ENCODE measurements at regions of chr1 and their contacts with region 1.

Region 1: DNA sequence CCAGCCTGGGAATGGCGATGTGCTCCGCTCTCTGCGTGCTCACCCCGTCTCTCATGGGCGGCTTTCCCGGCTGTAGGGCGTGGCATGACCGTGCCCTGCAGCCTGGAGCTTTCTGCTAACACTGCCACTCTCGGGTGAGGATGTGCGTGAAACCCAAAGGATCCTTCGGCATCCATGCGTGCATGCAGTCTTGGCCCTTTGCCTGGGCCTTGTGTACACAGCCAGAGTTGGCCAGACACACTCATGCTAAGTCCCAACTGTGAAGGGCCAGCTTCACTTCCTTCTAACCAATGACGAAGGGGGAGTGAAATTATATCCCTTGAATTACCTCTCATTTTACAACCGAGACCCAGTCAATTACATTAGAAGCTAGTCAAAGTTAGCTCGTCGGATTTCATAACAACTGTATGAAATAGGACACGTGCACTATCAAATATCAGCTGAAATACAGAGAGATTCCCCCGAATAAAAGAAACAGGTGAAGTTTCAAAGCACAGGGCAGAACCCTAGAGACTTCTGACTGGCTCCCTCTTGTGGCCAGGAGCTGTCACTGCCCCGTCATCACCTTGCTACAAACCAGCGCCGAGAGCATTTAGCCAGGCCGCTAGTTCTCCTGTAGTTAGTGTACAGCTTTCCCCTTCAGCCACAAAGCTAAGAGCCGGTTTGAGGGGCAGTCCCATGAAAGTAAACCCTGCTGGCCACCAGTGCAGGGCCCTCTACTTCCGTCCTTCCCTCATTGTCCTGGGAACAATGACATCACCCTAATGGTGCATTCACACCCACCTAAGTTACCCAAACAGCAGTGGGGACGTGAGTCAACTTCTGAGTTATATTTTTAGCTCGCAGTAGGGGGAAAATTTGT is 63.4 kb upstream of the COA6 start:
- DNase-seq: peak; percentile 86
- ATAC-seq: peak; percentile 93
- H3K4me3 ChIP-seq: peak overlapping the region; percentile 30
- H3K27ac ChIP-seq: peak overlapping the region; percentile 67 to 81
- H3K4me1 ChIP-seq: peaks cover 24% of the 10 kb centered on the region
- CTCF ChIP-seq: peak; percentile 94
- EP300 ChIP-seq: no peak; a peak in 1 of 5 replicates
- POLR2A ChIP-seq: no peak
- RAD21 ChIP-seq: peak; percentile 72 to 76

Region 2: DNA sequence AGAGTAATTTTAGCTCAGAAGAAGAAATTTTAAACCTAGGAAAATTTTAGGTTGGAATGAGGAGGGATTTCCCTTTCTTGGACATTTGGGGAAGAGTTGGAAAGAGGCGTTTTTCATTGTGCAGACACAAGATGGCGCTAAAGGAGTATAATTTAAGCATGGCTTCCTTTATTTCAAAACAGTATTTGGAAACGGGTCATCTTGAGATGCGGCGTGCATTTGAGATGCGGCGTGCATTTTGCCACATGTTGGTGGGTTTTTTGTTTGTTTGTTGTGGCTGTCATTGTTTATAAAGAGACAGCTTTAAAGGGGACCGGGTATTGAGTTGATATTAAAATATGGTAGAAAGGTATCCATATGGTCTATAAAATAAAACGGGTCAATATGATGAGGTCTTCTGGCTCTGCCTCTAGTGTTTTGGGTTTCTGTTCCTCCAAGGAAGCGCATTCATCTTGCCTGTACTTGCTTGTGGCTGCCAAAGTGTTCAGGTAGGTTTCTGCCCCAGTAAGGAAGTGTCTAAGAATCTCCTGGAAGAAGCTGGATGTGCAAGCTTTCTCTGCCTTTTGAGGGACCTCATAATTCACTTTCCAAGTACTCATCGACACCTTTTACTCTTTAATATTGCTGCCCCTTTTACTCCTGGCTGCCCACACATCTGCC is 195.1 kb before region 1 on chr1:
- CTCF ChIA-PET with region 1: interaction called, 116 read pairs
- POLR2A ChIA-PET with region 1: interaction called, 4 read pairs
- DNase-seq: peak; percentile 52 to 69
- ATAC-seq: peak; percentile 66 to 67; a peak in 5 of 6 replicates
- H3K4me3 ChIP-seq: peak overlapping the region; percentile 34
- H3K27ac ChIP-seq: peak overlapping the region; percentile 56 to 78
- H3K4me1 ChIP-seq: peaks cover 25% of the 10 kb centered on the region
- CTCF ChIP-seq: peak; percentile 88
- EP300 ChIP-seq: no peak
- POLR2A ChIP-seq: no peak
- RAD21 ChIP-seq: peak; percentile 84 to 93

Region 3: DNA sequence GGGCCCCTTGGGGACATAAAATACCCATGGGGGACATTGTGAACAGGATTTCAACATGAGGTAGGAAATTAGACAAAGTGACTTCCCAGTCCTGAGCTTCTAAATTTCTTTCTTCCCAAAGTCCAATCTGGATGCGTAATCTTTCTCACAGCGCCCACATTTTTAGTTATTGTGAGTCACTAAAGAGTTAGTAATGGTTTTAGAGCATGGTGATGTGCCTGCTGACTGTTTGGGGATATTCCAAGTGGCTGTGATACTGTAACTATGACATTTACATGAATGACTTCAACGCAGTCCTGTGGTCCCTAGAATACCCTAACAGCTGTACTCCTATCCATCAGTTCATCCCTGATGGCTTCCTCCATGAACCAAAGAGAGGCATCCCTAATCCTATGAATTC is 160.6 kb before region 1 on chr1:
- CTCF ChIA-PET with region 1: interaction called, 24 read pairs
- POLR2A ChIA-PET with region 1: no interaction called
- DNase-seq: no peak
- ATAC-seq: no peak
- H3K4me3 ChIP-seq: no peak overlapping the region
- H3K27ac ChIP-seq: peak overlapping the region in 1 of 2 experiments; percentile 61; a peak in 2 of 6 replicates
- H3K4me1 ChIP-seq: 0 out of 3 replicates have a peak, but pooled peaks cover 2% of the 10 kb centered on the region
- CTCF ChIP-seq: no peak
- EP300 ChIP-seq: no peak
- POLR2A ChIP-seq: no peak
- RAD21 ChIP-seq: no peak

Region 4: DNA sequence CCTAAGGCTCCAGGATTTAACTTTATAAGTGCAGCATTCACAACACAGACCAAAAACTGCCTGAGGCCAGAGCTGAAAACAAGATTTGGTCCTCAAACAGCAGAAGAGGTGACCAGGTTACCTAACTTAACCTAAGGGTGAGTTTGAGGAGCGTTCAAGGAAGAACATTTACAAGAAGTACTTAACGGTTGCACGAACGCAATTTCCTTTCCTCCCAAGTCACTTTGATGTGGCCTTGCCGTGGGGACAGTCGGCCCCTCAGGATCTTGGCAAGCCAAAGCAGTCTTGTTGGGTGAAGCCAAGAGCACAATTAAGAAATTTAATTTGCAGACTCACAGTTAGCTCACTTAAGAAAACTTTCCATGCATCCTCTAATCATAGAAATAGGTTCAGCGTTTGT is 139.2 kb before region 1 on chr1:
- CTCF ChIA-PET with region 1: interaction called, 32 read pairs
- POLR2A ChIA-PET with region 1: no interaction called
- DNase-seq: no peak
- ATAC-seq: no peak
- H3K4me3 ChIP-seq: no peak overlapping the region
- H3K27ac ChIP-seq: no peak overlapping the region
- H3K4me1 ChIP-seq: no peaks in the 10 kb centered on the region
- CTCF ChIP-seq: no peak
- EP300 ChIP-seq: no peak
- POLR2A ChIP-seq: no peak
- RAD21 ChIP-seq: no peak

Region 5: DNA sequence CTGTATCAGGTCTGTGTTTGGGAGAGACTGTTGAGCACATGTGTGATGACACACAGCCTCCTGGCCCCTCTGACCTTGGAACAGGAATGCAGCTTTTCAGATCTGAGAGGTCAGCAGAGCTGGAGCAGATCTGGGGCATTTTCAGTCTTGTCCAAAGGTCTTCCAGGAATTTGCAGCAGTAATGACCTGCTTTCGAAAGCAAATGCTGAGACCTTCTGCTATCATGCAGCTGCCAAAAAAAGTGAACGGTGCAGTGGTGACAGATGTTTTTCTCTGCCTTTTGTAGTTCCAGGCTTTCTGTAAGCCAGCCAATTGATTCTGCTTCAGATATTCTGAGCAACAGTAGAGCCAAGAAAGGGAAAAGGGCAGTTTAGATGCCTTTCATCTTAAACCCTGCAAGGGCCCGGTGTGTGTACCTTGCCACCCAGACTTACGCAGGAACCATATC is 74.4 kb before region 1 on chr1:
- CTCF ChIA-PET with region 1: interaction called, 11 read pairs
- POLR2A ChIA-PET with region 1: no interaction called
- DNase-seq: no peak
- ATAC-seq: no peak
- H3K4me3 ChIP-seq: no peak overlapping the region
- H3K27ac ChIP-seq: no peak overlapping the region
- H3K4me1 ChIP-seq: no peaks in the 10 kb centered on the region
- CTCF ChIP-seq: no peak
- EP300 ChIP-seq: no peak
- POLR2A ChIP-seq: no peak
- RAD21 ChIP-seq: no peak

Region 6: GRCh38 chr1:234276151-234276788 is 33.6 kb before region 1 on chr1:
- CTCF ChIA-PET with region 1: interaction called, 16 read pairs
- POLR2A ChIA-PET with region 1: no interaction called
- DNase-seq: no peak
- ATAC-seq: no peak
- H3K4me3 ChIP-seq: no peak overlapping the region
- H3K27ac ChIP-seq: no peak overlapping the region
- H3K4me1 ChIP-seq: no peaks in the 10 kb centered on the region
- CTCF ChIP-seq: no peak
- EP300 ChIP-seq: no peak
- POLR2A ChIP-seq: no peak
- RAD21 ChIP-seq: no peak

Region 7: GRCh38 chr1:234295068-234295467 is 14.8 kb before region 1 on chr1:
- CTCF ChIA-PET with region 1: interaction called, 20 read pairs
- POLR2A ChIA-PET with region 1: no interaction called
- DNase-seq: no peak
- ATAC-seq: no peak
- H3K4me3 ChIP-seq: no peak overlapping the region
- H3K27ac ChIP-seq: no peak overlapping the region
- H3K4me1 ChIP-seq: no peaks in the 10 kb centered on the region
- CTCF ChIP-seq: no peak
- EP300 ChIP-seq: no peak
- POLR2A ChIP-seq: no peak
- RAD21 ChIP-seq: no peak

Region 8: GRCh38 chr1:234433563-234434285 is 123.9 kb after region 1 on chr1:
- CTCF ChIA-PET with region 1: no interaction called
- POLR2A ChIA-PET with region 1: no interaction called
- DNase-seq: peak in 1 of 2 experiments; percentile 60
- ATAC-seq: peak; percentile 70 to 83; a peak in 5 of 6 replicates
- H3K4me3 ChIP-seq: no peak overlapping the region
- H3K27ac ChIP-seq: 0 out of 6 replicates have a peak overlapping the region, but pooled peaks of 1 of the 2 experiments have one; percentile 27
- H3K4me1 ChIP-seq: peaks cover 9% of the 10 kb centered on the region; the same call in 2 of the 3 replicates
- CTCF ChIP-seq: no peak
- EP300 ChIP-seq: no peak
- POLR2A ChIP-seq: no peak
- RAD21 ChIP-seq: no peak

Measured in A549 (cell line).